AG04450 (cell line): ENCODE measurements at regions of chr19 and their contacts with region 1.

Region 1: GRCh38 chr19:11798391-11799330 is at the start of gene ZNF491:
- DNase-seq: peak; percentile 61
- H3K4me3 ChIP-seq: peak within 1 kb of the TSS; percentile 85
- H3K27ac ChIP-seq: peak within 1 kb of the TSS; percentile 52
- H3K27me3 ChIP-seq: no peaks in the 10 kb centered on the region
- CTCF ChIP-seq: no peak
- polyA plus RNA-seq, gene ZNF491: 2.1 and 2.2 TPM in 2 replicates

Region 2: GRCh38 chr19:11781295-11782052 is 17.2 kb before region 1 on chr19:
- CTCF ChIA-PET with region 1: interaction called, 18 read pairs
- POLR2A ChIA-PET with region 1: no interaction called
- DNase-seq: no peak
- H3K4me3 ChIP-seq: no peak overlapping the region
- H3K27ac ChIP-seq: no peak overlapping the region
- H3K27me3 ChIP-seq: no peaks in the 10 kb centered on the region
- CTCF ChIP-seq: no peak

Region 3: DNA sequence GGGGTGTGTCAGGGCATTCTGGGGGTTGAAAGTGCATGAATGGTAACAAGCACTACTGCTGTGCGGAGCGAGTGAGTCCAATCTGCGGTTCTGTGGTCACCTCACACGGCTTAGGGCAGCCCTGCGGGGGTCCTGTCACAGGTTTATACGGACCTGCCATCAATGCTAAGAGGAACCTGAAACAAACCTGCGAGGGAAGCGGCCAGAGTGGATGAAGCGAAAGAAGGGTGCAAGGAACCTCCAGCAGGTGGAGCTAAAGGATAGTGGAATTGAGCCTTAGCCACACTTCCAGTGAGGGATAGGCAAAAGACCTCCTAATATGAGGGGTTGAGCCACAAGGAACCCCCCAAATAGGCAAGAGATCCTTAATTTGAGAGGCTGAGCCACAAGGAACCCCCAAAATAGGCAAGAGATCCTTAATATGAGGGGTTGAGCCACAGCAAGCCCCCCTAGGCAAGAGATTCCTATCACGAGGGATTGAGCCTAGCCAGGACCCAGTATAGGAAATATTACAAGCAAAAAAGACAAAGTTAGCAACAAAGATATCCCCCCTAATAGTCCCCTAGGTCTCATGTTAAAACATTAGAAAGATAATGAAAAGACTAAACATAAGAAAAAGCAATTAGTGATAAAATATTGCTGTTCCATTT is 82.6 kb after region 1 on chr19:
- CTCF ChIA-PET with region 1: interaction called, 15 read pairs
- POLR2A ChIA-PET with region 1: no interaction called
- DNase-seq: no peak
- H3K4me3 ChIP-seq: no peak overlapping the region
- H3K27ac ChIP-seq: no peak overlapping the region
- H3K27me3 ChIP-seq: peaks cover 4% of the 10 kb centered on the region
- CTCF ChIP-seq: peak; percentile 83

Region 4: DNA sequence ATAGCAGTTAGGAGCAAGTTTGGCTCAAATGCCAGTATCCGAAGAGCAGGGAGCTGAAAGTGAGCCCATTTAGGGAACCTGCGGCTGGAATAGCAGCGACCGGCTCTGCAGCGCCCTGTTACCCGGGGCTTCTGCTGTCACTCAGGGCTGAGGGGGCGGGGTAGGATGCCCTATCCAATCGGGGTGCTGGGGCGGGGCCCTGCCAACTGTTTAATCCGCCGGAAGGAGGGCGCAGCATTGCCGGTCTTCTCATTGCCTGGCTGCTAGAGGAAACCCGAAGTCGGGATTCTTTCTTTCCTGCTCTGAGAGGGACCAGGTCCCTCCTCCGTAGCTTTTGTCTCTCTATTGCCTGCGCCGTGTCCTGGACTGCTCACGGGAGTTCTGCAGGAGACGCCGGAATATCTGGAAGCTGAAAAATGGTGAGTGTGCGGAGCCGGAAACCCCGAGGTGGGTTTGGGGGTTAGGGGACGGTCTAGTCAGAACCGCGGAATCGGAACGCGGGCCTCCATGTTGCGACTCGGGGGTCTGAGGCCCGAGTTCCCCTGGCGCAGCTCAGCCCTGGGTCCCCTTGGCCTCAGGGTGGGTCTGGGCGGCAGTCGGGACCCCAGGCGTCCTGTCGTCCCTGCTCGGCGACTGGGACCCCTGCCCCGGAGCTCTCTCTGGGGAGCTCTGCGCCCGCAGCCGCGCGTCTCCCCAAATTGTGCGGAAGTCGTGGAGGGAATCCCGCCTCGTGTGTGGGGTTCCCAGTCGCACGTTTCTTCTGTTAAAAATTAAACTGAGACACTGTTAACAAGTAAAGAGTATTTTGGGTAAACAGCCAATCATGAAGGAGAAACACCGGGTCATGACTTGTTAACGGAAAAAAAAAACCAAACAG is 189.0 kb after region 1 on chr19:
- CTCF ChIA-PET with region 1: interaction called, 59 read pairs
- POLR2A ChIA-PET with region 1: interaction called, 3 read pairs
- DNase-seq: peak; percentile 78
- H3K4me3 ChIP-seq: peak overlapping the region; percentile 85
- H3K27ac ChIP-seq: peak overlapping the region; percentile 73
- H3K27me3 ChIP-seq: no peaks in the 10 kb centered on the region
- CTCF ChIP-seq: no peak